MCF 10A (cell line): ENCODE measurements at regions of chr5 and their contacts with region 1.

Region 1: GRCh38 chr5:170809551-170809950 is 26.0 kb downstream of the GABRP start:
- DNase-seq: peak; percentile 75
- H3K4me3 Mint-ChIP-seq: no peak overlapping the region
- H3K27ac Mint-ChIP-seq: no peak overlapping the region
- H3K4me1 Mint-ChIP-seq: no peaks in the 10 kb centered on the region
- H3K27me3 Mint-ChIP-seq: no peaks in the 10 kb centered on the region
- CTCF ChIP-seq: peak; percentile 87

Region 2: GRCh38 chr5:170861837-170862766 is 52.6 kb after region 1 on chr5 and contains the start of gene RANBP17:
- CTCF ChIA-PET with region 1: interaction called, 5 read pairs
- POLR2A ChIA-PET with region 1: no interaction called
- intact Hi-C with region 1: loop called (anchors 1 kb)
- DNase-seq: peak; percentile 79
- H3K4me3 Mint-ChIP-seq: peak within 1 kb of the TSS; percentile 68
- H3K27ac Mint-ChIP-seq: peak within 1 kb of the TSS; percentile 74
- H3K4me1 Mint-ChIP-seq: peaks cover 24% of the 10 kb centered on the region
- H3K27me3 Mint-ChIP-seq: no peaks in the 10 kb centered on the region
- CTCF ChIP-seq: peak; percentile 6
- total RNA-seq, gene RANBP17: 19.0 and 25.8 TPM in 2 replicates

Region 3: GRCh38 chr5:170917113-170917512 is 107.6 kb after region 1 on chr5:
- CTCF ChIA-PET with region 1: interaction called, 20 read pairs
- POLR2A ChIA-PET with region 1: no interaction called
- intact Hi-C with region 1: loop called (anchors 1 kb)
- DNase-seq: peak; percentile 22
- H3K4me3 Mint-ChIP-seq: no peak overlapping the region
- H3K27ac Mint-ChIP-seq: no peak overlapping the region
- H3K4me1 Mint-ChIP-seq: no peaks in the 10 kb centered on the region
- H3K27me3 Mint-ChIP-seq: no peaks in the 10 kb centered on the region
- CTCF ChIP-seq: peak; percentile 36

Region 4: GRCh38 chr5:171168171-171168570 is 358.6 kb after region 1 on chr5:
- CTCF ChIA-PET with region 1: no interaction called
- POLR2A ChIA-PET with region 1: no interaction called
- intact Hi-C with region 1: loop called (anchors 2 kb)
- DNase-seq: no peak
- H3K4me3 Mint-ChIP-seq: no peak overlapping the region
- H3K27ac Mint-ChIP-seq: peak overlapping the region; percentile 2
- H3K4me1 Mint-ChIP-seq: no peaks in the 10 kb centered on the region
- H3K27me3 Mint-ChIP-seq: no peaks in the 10 kb centered on the region
- CTCF ChIP-seq: no peak

Region 5: DNA sequence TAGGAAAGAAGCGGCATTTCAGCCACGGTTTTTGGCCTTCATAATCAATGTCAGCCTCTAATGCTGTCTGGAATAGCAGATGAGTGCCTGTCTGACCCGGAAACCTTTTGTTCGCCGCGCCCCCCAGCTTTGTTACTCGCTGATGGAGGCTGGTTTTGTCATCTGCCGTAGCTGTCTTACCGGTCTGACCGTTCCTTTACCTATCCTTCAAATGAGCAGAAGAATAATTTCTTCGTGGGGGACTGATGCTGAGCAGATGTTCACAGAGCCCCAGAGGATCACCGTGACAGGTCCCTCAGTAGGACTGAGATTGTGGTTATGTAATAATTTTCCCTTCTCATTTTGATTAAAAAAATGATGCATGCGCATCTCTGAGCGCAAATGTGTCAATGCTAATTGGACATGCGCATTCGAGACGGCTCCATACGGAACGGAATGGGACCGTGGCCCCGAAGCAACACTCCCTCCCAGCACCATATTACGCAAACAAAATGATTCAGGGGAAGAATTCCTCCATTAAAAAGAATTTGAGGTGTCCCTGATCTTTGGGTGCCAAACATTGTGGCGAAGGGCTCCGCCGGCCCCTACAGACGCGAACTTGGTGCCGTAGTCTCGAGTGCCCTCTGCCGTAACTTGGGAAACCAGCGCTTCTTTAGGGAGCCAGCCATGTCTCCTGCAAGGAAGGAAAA is 527.1 kb after region 1 on chr5:
- CTCF ChIA-PET with region 1: interaction called, 50 read pairs
- POLR2A ChIA-PET with region 1: interaction called, 3 read pairs
- intact Hi-C with region 1: loop called (anchors 1 kb)
- DNase-seq: peak; percentile 68
- H3K4me3 Mint-ChIP-seq: peak overlapping the region; percentile 75
- H3K27ac Mint-ChIP-seq: no peak overlapping the region
- H3K4me1 Mint-ChIP-seq: no peaks in the 10 kb centered on the region
- H3K27me3 Mint-ChIP-seq: peaks cover 7% of the 10 kb centered on the region
- CTCF ChIP-seq: peak; percentile 97